CD14-positive monocyte (primary cell): ENCODE measurements at regions of chr19 and their contacts with region 1.

Region 1: GRCh38 chr19:9796113-9796773 is 22.6 kb downstream of the FBXL12 start:
- DNase-seq: peak; percentile 85 to 94 (median 86)
- H3K4me3 ChIP-seq: no peak overlapping the region
- H3K4me3 Mint-ChIP-seq: peak overlapping the region; percentile 23 to 43
- H3K27ac ChIP-seq: peak overlapping the region in 1 of 2 donors; percentile 71
- H3K27ac Mint-ChIP-seq: peak overlapping the region; percentile 9 to 91 (median 72)
- H3K4me1 ChIP-seq: peaks cover 28 to 37% of the 10 kb centered on the region in 2 donors
- H3K4me1 Mint-ChIP-seq: peaks cover 34% of the 10 kb centered on the region
- H3K27me3 ChIP-seq: no peaks in the 10 kb centered on the region
- H3K27me3 Mint-ChIP-seq: no peaks in the 10 kb centered on the region
- CTCF ChIP-seq: peak; percentile 82

Region 2: GRCh38 chr19:9140159-9140874 is 655.9 kb before region 1 on chr19 and contains the start of gene ZNF317:
- intact Hi-C with region 1: loop called (anchors 10 kb)
- DNase-seq: peak; percentile 87 to 97 (median 91)
- H3K4me3 ChIP-seq: peak within 1 kb of the TSS; percentile 75 to 100 (median 98)
- H3K4me3 Mint-ChIP-seq: peak within 1 kb of the TSS; percentile 99
- H3K27ac ChIP-seq: peak within 1 kb of the TSS; percentile 77 to 97
- H3K27ac Mint-ChIP-seq: peak within 1 kb of the TSS; percentile 91 to 99 (median 98)
- H3K4me1 ChIP-seq: peaks cover 28 to 32% of the 10 kb centered on the region in 2 donors
- H3K4me1 Mint-ChIP-seq: peaks cover 40% of the 10 kb centered on the region
- H3K27me3 ChIP-seq: no peaks in the 10 kb centered on the region
- H3K27me3 Mint-ChIP-seq: peaks cover 0 to 5% (median 0%) of the 10 kb centered on the region in 3 donors
- CTCF ChIP-seq: no peak
- polyA plus RNA-seq, gene ZNF317: 17.3 to 25.5 (median 20.7) TPM

Region 3: DNA sequence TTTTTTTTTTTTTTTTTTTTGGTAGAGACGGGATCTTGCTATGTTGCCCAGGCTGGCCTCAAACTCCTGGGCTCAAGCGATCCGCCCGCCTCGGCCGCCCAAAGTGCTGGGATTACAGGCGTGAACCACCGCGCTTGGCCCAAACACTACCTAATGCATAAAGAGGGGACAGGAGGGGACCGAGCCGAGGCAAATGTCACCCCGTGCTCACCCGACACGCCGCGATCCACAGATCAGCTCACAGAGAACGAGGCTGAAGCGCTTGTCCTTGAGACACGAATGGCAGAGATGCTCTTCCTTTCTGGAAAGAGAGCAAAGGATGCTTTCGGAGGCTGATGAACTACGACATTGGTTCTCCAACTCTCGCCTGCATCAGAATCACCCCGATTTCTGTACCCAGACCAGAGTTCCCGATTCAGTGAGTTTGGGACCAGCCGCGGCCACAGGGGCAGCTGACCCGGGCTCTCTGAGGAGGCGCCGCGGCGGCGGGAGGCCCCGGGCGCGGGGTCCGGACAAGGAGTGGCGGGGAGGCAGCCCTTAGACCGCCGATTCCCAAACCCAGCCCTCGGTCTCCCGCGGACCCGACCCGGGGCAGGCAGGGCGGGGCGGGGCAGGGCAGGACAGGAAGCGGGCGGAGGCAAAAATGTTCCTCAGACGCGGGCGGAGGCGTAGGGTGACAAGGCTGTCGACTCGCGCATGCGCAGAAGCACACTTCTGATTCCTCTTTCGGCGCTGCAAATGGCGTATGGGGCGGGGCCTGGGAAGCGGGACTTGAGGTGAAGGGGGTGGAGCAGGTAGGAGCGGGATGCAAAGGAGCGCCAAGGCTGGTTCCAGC is 486.9 kb before region 1 on chr19 and contains the start of gene ZNF699:
- intact Hi-C with region 1: loop called (anchors 5 to 10 kb)
- DNase-seq: peak; percentile 96 to 99 (median 97)
- H3K4me3 ChIP-seq: peak within 1 kb of the TSS; percentile 55 to 93 (median 83)
- H3K4me3 Mint-ChIP-seq: peak within 1 kb of the TSS; percentile 97 to 98
- H3K27ac ChIP-seq: peak within 1 kb of the TSS; percentile 58 to 96
- H3K27ac Mint-ChIP-seq: peak within 1 kb of the TSS; percentile 96 to 99 (median 98)
- H3K4me1 ChIP-seq: peaks cover 13 to 18% of the 10 kb centered on the region in 2 donors
- H3K4me1 Mint-ChIP-seq: peaks cover 19% of the 10 kb centered on the region
- H3K27me3 ChIP-seq: no peaks in the 10 kb centered on the region
- H3K27me3 Mint-ChIP-seq: peaks cover 1 to 4% (median 2%) of the 10 kb centered on the region in 3 donors
- CTCF ChIP-seq: no peak
- polyA plus RNA-seq, gene ZNF699: 3.4 to 18.5 (median 5.6) TPM

Region 4: DNA sequence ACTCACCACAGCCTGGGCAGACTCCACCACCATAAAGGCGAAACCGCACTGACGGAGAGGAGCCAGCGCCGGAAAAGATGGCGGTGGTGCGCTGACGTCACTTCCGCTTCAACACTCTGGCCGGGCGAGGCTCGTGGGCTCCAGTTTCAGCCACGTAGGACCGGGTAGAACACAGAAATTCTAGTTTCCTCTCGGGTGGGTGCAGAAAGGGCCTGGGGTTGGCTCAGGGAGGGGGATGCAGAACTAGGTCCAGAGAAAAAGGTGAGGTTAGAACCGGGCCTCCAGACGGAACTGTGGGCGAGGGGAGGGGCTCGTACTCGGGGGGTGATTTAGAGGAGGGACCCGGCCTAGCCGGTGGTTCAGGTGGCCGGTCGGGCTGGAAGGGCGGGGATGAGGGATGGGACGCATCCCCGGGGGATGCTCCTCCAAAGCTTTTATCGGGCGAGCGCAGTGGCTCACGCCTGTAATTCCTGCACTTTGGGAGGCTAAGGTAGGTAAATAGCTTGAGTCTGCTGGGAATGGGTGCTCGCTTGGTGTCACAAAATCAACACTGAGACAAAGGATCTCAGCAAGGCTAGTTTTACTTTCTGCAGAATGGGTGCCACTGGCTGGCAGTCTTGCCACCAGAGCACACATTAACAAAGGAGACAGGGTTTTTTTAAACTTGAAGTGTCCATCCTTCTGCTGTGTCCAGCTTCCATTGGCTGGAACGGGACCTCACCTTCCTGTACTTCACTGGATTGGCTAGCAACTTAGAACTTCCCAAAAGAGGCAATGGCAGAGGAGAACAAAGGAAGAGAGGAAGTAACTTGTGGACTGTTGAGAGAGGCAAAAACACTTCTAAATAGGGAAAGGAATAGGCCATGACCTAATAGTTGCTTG is 174.8 kb before region 1 on chr19 and contains the start of gene ZNF561:
- intact Hi-C with region 1: loop called (anchors 1 to 2 kb)
- DNase-seq: peak; percentile 83 to 89 (median 87)
- H3K4me3 ChIP-seq: peak within 1 kb of the TSS; percentile 75 to 99 (median 96)
- H3K4me3 Mint-ChIP-seq: peak within 1 kb of the TSS; percentile 99 to 100
- H3K27ac ChIP-seq: peak within 1 kb of the TSS; percentile 93 to 95
- H3K27ac Mint-ChIP-seq: peak within 1 kb of the TSS; percentile 99 to 100 (median 100)
- H3K4me1 ChIP-seq: peaks cover 23 to 25% of the 10 kb centered on the region in 2 donors
- H3K4me1 Mint-ChIP-seq: peaks cover 22% of the 10 kb centered on the region
- H3K27me3 ChIP-seq: no peaks in the 10 kb centered on the region
- H3K27me3 Mint-ChIP-seq: no peaks in the 10 kb centered on the region
- CTCF ChIP-seq: no peak
- polyA plus RNA-seq, gene ZNF561: 11.0 to 14.3 (median 12.5) TPM

Region 5: DNA sequence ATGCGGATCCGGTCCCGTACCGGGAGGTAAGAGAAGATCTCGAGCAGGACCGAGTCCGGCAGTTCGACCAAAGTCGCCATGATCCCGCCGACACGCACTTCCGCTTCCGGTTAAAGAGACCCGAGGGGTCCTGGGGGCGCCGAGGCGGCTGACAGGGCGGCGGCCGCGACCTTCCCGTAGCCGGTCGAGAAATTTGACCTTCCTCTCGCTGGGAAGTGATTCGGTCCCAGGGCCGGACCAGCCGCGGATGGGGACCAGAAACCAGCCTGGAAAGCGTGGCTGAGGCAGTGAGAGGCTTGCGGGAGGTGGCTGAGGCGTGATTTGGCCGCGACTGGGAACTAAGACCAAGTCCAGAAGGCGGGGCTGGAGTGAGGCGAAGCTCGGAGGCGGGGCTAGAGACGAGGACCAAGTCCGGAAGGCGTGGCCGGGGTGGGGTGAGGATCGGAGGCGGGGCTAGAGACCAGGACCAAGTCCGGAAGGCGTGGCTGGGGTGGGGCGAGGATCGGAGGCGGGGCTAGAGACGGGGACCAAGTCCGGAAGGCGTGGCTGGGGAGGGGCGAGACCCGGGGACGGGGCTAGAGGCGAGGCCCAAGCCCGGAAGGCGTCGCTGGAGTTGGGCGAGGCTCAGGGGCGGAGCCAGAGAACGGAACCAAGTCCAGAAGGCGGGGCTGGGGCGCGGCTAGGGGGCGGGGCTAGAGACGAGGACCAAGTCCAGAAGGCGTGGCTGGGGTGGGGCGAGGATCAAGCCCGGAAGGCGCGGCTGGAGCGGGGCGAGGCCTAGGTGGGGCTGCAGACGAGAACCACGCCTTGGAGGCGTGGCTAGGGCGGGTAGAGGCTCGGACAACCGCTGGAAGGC is 22.7 kb after region 1 on chr19 and contains the start of gene FBXL12:
- intact Hi-C with region 1: loop called (anchors 1 kb)
- DNase-seq: peak; percentile 100
- H3K4me3 ChIP-seq: peak within 1 kb of the TSS; percentile 82 to 99 (median 92)
- H3K4me3 Mint-ChIP-seq: peak within 1 kb of the TSS; percentile 87 to 92
- H3K27ac ChIP-seq: peak within 1 kb of the TSS; percentile 96 to 99
- H3K27ac Mint-ChIP-seq: peak within 1 kb of the TSS; percentile 96 to 98 (median 97)
- H3K4me1 ChIP-seq: peaks cover 15 to 22% of the 10 kb centered on the region in 2 donors
- H3K4me1 Mint-ChIP-seq: peaks cover 20% of the 10 kb centered on the region
- H3K27me3 ChIP-seq: no peaks in the 10 kb centered on the region
- H3K27me3 Mint-ChIP-seq: no peaks in the 10 kb centered on the region
- CTCF ChIP-seq: no peak
- polyA plus RNA-seq, gene FBXL12: 6.6 to 49.8 (median 8.1) TPM